Caco-2 (cell line): ENCODE measurements at regions of chr10 and their contacts with region 1.

Region 1: GRCh38 chr10:113555751-113556150 is 2.9 kb downstream of the HABP2 start:
- DNase-seq: peak; percentile 81 to 89
- H3K4me3 ChIP-seq: no peak overlapping the region
- H3K4me3 Mint-ChIP-seq: peak overlapping the region; percentile 65
- H3K27ac Mint-ChIP-seq: peak overlapping the region; percentile 99
- H3K4me1 ChIP-seq: peaks cover 84% of the 10 kb centered on the region
- H3K4me1 Mint-ChIP-seq: peaks cover 62% of the 10 kb centered on the region
- H3K27me3 ChIP-seq: no peaks in the 10 kb centered on the region
- H3K27me3 Mint-ChIP-seq: no peaks in the 10 kb centered on the region
- CTCF ChIP-seq: no peak

Region 2: DNA sequence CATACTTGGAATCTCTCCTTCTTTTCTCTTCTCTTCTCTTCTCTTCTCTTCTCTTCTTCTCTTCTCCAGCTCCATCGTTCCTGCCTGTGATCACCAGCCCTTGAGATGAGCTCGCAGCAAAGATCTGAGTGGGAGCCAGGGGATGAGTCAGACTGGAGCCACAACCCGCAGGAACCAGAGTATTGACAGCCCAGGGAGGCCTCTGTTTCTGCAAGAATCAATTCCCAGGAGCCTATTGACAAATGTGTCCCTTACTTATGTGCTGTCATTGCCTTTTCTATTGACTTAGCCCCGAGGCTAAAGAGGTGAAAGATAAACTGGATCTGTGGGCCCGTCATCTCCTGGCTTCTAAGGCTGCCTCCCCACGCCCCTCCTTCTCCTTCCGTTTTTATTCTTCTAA is 16.0 kb before region 1 on chr10:
- CTCF ChIA-PET with region 1: interaction called, 4 read pairs
- POLR2A ChIA-PET with region 1: interaction called, 6 read pairs
- intact Hi-C with region 1: loop called (anchors 1 kb)
- DNase-seq: peak; percentile 52 to 56
- H3K4me3 ChIP-seq: no peak overlapping the region
- H3K4me3 Mint-ChIP-seq: no peak overlapping the region
- H3K27ac Mint-ChIP-seq: peak overlapping the region; percentile 66
- H3K4me1 ChIP-seq: peaks cover 47% of the 10 kb centered on the region
- H3K4me1 Mint-ChIP-seq: peaks cover 33% of the 10 kb centered on the region
- H3K27me3 ChIP-seq: no peaks in the 10 kb centered on the region
- H3K27me3 Mint-ChIP-seq: no peaks in the 10 kb centered on the region
- CTCF ChIP-seq: no peak